ENCODE measurements at regions of chr3 and their contacts with region 1.

Region 1: DNA sequence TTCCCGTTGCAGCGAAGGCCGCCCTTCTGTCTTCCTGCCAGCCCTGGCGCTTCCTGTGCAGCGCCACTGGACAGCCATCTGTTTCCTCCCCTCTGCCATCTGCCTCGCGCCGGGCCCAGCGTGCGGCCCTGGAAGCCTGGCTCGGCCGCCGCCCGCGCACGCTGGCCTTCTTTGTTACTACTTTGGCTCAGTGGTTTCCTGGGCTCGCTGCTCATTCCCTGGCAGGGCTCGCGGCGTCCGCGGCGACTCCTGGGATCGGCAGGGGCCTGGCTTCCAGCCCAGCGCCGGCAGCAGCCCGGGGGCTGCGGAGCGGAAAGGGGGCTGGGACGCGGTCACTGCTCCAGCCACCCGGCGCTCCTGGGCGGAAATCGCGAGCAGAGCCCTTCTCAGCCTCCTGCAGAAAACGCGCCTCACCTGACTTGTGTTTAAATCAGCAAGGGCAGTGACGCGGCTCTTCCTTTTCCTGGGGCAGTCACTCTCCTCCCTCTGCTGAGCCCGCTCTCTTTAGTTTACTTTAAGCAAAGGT is 10.0 kb downstream of the CMTM7 start:
- DNase-seq: peak; percentile 62
- H3K4me3 Mint-ChIP-seq: peak overlapping the region; percentile 81
- H3K27ac Mint-ChIP-seq: peak overlapping the region; percentile 98
- H3K4me1 Mint-ChIP-seq: peaks cover 84% of the 10 kb centered on the region
- H3K27me3 Mint-ChIP-seq: no peaks in the 10 kb centered on the region
- CTCF ChIP-seq: no peak

Region 2: DNA sequence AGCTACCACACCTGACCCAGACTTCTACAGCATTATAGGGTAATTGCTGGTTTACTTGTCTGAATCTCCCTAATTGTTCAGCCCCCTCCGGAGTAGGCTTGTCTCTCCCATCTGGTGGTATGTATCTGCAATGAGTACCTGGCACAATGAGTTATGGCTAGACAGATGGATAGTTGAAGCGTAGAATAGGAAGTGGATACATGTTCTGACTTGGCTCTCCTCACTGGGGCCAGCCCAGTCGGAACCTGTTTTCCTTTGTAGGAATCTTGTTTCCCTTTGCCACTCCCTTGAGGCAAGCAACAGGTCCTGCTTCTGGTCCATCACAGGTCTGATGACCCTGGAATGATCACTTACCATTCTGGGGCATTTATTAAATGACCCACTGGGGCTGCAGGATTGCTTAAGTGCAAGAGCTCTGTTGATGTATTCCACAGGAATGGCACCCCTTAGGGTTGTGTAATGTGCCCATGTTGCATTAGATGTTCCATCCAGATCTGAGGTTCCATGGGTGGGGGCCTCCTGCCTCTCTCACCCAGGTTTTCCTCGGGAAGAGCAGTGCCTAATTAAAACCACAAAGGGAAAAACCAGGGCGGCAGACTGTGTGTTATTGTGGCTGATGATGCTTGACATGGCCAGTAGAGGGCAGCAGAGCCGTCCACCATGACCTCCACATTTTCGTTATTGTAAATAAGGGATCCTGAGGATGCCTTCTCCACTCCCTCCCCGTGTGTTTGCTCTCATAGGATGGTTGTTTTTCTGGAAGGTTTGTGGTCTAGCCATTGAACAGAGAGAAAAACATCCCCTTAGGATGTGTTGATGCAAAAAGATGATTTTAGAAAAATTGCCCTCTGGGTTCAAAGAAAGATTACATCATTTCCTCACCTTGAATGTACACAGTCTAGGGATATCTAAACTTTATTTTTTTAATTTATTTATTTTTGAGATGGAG is 105.1 kb before region 1 on chr3:
- CTCF ChIA-PET with region 1: interaction called, 6 read pairs
- intact Hi-C with region 1: loop called (anchors 5 kb)
- DNase-seq: peak; percentile 52
- H3K4me3 Mint-ChIP-seq: no peak overlapping the region
- H3K27ac Mint-ChIP-seq: no peak overlapping the region
- H3K4me1 Mint-ChIP-seq: peaks cover 11% of the 10 kb centered on the region
- H3K27me3 Mint-ChIP-seq: no peaks in the 10 kb centered on the region
- CTCF ChIP-seq: peak; percentile 71

Region 3: GRCh38 chr3:32421991-32422859 is 20.6 kb after region 1 on chr3:
- CTCF ChIA-PET with region 1: no interaction called
- intact Hi-C with region 1: loop called (anchors 1 kb)
- DNase-seq: peak; percentile 96
- H3K4me3 Mint-ChIP-seq: peak overlapping the region; percentile 66
- H3K27ac Mint-ChIP-seq: peak overlapping the region; percentile 98
- H3K4me1 Mint-ChIP-seq: peaks cover 62% of the 10 kb centered on the region
- H3K27me3 Mint-ChIP-seq: no peaks in the 10 kb centered on the region
- CTCF ChIP-seq: no peak

Region 4: DNA sequence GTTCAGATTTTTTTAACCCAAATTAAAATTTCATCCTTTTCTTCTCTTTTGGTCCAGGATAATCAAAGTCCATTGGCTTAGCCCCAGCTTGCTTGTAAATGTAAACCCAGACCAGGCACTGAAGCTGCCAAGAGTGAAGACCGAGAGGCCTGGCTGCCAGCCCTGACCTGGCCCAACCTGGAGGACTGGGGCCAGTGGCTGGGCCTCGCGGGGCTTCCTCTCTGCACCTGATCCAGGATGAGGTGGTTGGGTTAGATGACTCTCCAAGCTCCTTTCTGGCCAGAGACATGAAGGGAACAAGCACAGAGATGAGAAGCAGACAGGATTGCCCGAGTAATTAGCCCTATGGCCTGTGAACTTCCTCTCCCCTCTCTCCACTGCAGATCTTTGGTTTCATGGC is 50.4 kb after region 1 on chr3:
- CTCF ChIA-PET with region 1: interaction called, 15 read pairs
- intact Hi-C with region 1: no loop called
- DNase-seq: no peak
- H3K4me3 Mint-ChIP-seq: no peak overlapping the region
- H3K27ac Mint-ChIP-seq: no peak overlapping the region
- H3K4me1 Mint-ChIP-seq: peaks cover 23% of the 10 kb centered on the region
- H3K27me3 Mint-ChIP-seq: no peaks in the 10 kb centered on the region
- CTCF ChIP-seq: no peak

Measured in Calu3 (cell line).